Transverse colon (tissue), 4 donors: ENCODE measurements at regions of chr2 and their contacts with region 1.

Region 1: GRCh38 chr2:83186105-83186760 is 1272.8 kb downstream of the SUCLG1 start:
- DNase-seq: no peak
- H3K4me3 ChIP-seq: no peak overlapping the region
- H3K27ac ChIP-seq: no peak overlapping the region
- H3K4me1 ChIP-seq: no peaks in the 10 kb centered on the region
- H3K27me3 ChIP-seq: no peaks in the 10 kb centered on the region
- CTCF ChIP-seq: no peak
- EP300 ChIP-seq: no peak
- POLR2A ChIP-seq: no peak

Region 2: GRCh38 chr2:81901011-81901410 is 1285.2 kb before region 1 on chr2:
- in situ Hi-C with region 1: no loop called
- intact Hi-C with region 1: loop called (anchors 10 kb)
- DNase-seq: no peak
- H3K4me3 ChIP-seq: no peak overlapping the region
- H3K27ac ChIP-seq: no peak overlapping the region
- H3K4me1 ChIP-seq: peaks cover 0 to 2% (median 0%) of the 10 kb centered on the region in 4 donors
- H3K27me3 ChIP-seq: no peaks in the 10 kb centered on the region
- CTCF ChIP-seq: peak in 4 of 5 experiments; percentile 26 to 37 (median 30)
- EP300 ChIP-seq: no peak
- POLR2A ChIP-seq: no peak

Region 3: DNA sequence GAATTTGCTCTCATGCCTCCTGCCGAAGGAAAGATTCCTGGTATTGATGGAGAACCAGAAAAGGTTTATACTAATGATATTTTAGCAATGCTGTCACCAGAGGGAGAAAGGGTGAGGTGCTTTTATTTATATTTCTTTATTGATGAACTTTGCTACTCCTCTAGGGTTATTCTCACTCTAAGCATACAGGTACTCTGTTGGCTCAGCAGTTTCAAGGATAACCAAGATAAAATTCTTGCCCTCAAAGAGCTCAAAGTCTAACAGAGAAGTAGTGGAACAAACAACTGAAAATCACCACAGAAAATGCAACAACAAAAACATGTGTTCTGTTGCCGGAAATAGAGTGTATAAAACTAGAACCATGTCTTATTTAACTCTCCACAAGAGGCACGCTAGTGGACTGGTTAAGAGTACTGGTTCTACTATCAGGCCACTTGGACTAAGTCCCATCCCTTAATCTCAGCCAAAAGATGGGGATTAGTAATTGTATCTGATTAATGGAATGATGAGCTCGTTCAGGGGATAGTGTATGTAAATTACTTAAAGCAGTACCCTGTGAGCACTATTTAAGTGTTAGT is 1433.7 kb after region 1 on chr2:
- in situ Hi-C with region 1: no loop called
- intact Hi-C with region 1: loop called (anchors 5 kb)
- DNase-seq: no peak
- H3K4me3 ChIP-seq: no peak overlapping the region
- H3K27ac ChIP-seq: no peak overlapping the region
- H3K4me1 ChIP-seq: no peaks in the 10 kb centered on the region
- H3K27me3 ChIP-seq: no peaks in the 10 kb centered on the region
- CTCF ChIP-seq: no peak
- EP300 ChIP-seq: no peak
- POLR2A ChIP-seq: no peak